Gastrocnemius medialis (tissue), 4 donors: ENCODE measurements at regions of chr6 and their contacts with region 1.

Region 1: GRCh38 chr6:125191916-125192609 is 38.5 kb downstream of the TPD52L1 start:
- DNase-seq: peak in 1 of 2 donors; percentile 77
- ATAC-seq: peak; percentile 21 to 68
- H3K4me3 ChIP-seq: no peak overlapping the region
- H3K27ac ChIP-seq: peak overlapping the region; percentile 90 to 94 (median 92)
- H3K4me1 ChIP-seq: peaks cover 96 to 100% of the 10 kb centered on the region in 2 donors
- H3K27me3 ChIP-seq: no peaks in the 10 kb centered on the region
- CTCF ChIP-seq: peak; percentile 54 to 75 (median 62)
- POLR2A ChIP-seq: no peak

Region 2: GRCh38 chr6:125129354-125129753 is 62.7 kb before region 1 on chr6:
- in situ Hi-C with region 1: no loop called
- intact Hi-C with region 1: no loop called
- DNase-seq: no peak
- ATAC-seq: no peak
- H3K4me3 ChIP-seq: no peak overlapping the region
- H3K27ac ChIP-seq: no peak overlapping the region
- H3K4me1 ChIP-seq: no peaks in the 10 kb centered on the region
- H3K27me3 ChIP-seq: no peaks in the 10 kb centered on the region
- CTCF ChIP-seq: no peak
- POLR2A ChIP-seq: no peak

Region 3: GRCh38 chr6:125207956-125208355 is 15.9 kb after region 1 on chr6:
- in situ Hi-C with region 1: no loop called
- intact Hi-C with region 1: loop called (anchors 2 kb)
- DNase-seq: no peak
- ATAC-seq: no peak
- H3K4me3 ChIP-seq: no peak overlapping the region
- H3K27ac ChIP-seq: peak overlapping the region; percentile 56 to 94 (median 77)
- H3K4me1 ChIP-seq: peaks cover 67 to 76% of the 10 kb centered on the region in 2 donors
- H3K27me3 ChIP-seq: no peaks in the 10 kb centered on the region
- CTCF ChIP-seq: no peak
- POLR2A ChIP-seq: no peak

Region 4: DNA sequence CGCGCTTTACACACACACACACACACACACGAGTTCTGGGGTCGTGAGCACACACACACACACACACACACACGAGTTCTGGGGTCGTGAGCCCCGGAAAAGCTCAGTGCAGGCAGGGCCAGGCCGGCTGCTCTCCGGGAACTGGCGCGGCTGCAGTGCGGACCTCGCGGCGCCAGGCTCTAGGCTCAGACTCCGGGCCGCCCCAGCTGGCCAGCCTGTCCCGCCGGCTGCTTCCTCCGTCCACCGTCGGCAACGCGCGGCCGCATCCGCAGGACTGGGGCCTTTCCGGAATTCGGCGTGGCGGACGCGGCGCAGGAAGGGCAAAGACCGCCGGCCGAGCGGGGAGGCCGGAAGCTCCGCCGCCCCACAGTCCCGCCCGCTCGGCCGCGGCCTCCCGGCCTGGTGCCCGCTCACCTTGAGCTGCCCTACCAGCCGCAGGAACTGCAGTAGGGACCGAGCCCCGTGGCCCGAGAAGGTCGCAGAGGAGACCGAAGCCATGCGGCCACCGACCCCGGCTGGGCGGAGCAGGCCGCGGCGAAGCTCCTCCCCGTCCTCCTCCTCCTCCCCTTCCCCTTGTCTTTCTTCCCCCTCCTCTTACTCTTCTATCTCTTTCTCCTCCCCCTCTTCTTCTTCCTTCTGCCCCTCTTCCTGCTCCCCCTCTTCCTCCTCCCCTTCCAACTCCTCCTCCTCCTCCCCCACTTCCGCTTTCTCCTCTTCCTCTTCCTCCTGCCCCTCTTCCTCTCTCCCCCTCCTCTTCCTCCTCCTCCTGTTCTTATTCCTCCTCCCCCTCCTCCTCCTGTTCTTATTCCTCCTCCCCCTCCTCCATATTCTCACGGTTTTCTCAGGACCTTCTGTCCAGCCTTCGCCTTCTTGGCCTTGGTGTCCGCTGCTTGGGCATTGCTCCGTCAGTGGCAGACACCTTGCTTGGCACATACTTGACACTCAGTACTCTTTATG is 109.7 kb after region 1 on chr6 and contains the start of gene HDDC2:
- in situ Hi-C with region 1: no loop called
- intact Hi-C with region 1: loop called (anchors 5 kb)
- DNase-seq: peak; percentile 43 to 64
- ATAC-seq: peak; percentile 76 to 78
- H3K4me3 ChIP-seq: peak within 1 kb of the TSS; percentile 72 to 90 (median 78)
- H3K27ac ChIP-seq: peak within 1 kb of the TSS; percentile 84 to 96 (median 93)
- H3K4me1 ChIP-seq: peaks cover 21 to 33% of the 10 kb centered on the region in 2 donors
- H3K27me3 ChIP-seq: no peaks in the 10 kb centered on the region
- CTCF ChIP-seq: peak in 1 of 5 experiments; percentile 23
- POLR2A ChIP-seq: peak; percentile 44 to 58
- total RNA-seq, gene HDDC2: 54.9 to 88.3 (median 77.7) TPM